Naive thymus-derived CD4-positive, alpha-beta T cell (primary cell): ENCODE measurements at regions of chr1 and their contacts with region 1.

Region 1: DNA sequence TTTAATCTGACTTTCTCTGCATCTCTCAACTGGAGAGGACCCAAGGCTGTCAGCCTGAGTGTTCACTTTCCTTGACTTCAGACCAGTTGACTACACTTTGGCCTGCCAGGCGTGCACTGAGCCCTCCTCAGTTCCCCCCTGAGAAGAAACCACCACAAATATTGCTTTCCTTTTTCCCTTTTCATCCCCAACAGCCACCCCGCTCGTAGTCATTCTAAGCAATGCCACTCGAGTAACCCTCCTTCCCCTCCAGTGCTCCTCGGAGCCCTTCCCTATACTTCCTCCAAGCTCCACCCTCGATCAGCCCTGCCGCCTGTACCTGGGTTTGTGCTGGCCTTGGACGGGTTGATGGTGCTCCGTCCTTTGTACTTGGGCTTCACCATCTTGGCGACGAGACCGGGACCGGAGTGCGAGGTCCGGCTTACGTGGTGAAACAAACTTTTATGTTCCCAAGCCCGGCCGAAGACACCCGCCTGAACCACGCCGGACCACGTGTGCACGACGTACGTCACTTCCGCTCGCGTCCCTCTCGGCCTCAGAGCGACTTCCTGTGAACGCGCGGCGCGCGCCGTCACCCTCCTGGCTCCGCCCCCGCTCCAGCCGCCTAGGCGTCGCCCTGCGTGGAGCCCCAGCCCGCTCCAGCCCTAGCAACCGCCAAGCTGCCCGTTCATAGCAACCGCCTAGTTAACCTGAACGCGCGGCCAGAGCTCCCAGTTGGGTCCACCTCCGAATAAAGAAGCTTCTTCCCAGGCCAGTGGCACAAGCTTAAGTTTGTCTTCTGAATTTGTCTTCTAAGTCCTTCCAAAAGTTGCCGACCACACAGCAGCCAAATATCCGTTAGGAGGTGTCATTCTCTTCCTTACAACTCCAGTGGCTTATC is at the start of gene GNL2:
- DNase-seq: peak; percentile 91 to 97 (median 95)
- ATAC-seq: peak; percentile 99
- H3K4me3 ChIP-seq: peak within 1 kb of the TSS; percentile 81
- H3K4me3 Mint-ChIP-seq: peak within 1 kb of the TSS; percentile 96 to 100 (median 99)
- H3K27ac ChIP-seq: peak within 1 kb of the TSS; percentile 86
- H3K27ac Mint-ChIP-seq: peak within 1 kb of the TSS; percentile 92 to 99 (median 98)
- H3K4me1 ChIP-seq: peaks cover 12 to 22% of the 10 kb centered on the region in 2 donors
- H3K4me1 Mint-ChIP-seq: peaks cover 17 to 43% (median 33%) of the 10 kb centered on the region in 7 donors
- H3K27me3 ChIP-seq: no peaks in the 10 kb centered on the region
- H3K27me3 Mint-ChIP-seq: peaks cover 0 to 12% (median 0%) of the 10 kb centered on the region in 5 donors
- total RNA-seq, gene GNL2: 33.3 to 60.9 (median 56.0) TPM

Region 2: GRCh38 chr1:37449936-37450335 is 145.7 kb before region 1 on chr1:
- CTCF ChIA-PET with region 1: no interaction called
- POLR2A ChIA-PET with region 1: no interaction called
- intact Hi-C with region 1: loop called in 1 of 2 experiments (anchors 2 kb)
- DNase-seq: peak in 6 of 9 donors; percentile 20 to 48 (median 39)
- ATAC-seq: peak; percentile 82
- H3K4me3 ChIP-seq: no peak overlapping the region
- H3K4me3 Mint-ChIP-seq: peak overlapping the region in 6 of 10 donors; percentile 29 to 65 (median 48)
- H3K27ac ChIP-seq: no peak overlapping the region
- H3K27ac Mint-ChIP-seq: peak overlapping the region in 7 of 9 donors; percentile 10 to 77 (median 38)
- H3K4me1 ChIP-seq: peaks cover 0 to 8% of the 10 kb centered on the region in 2 donors
- H3K4me1 Mint-ChIP-seq: peaks cover 5 to 17% (median 13%) of the 10 kb centered on the region in 7 donors
- H3K27me3 ChIP-seq: no peaks in the 10 kb centered on the region
- H3K27me3 Mint-ChIP-seq: peaks cover 0 to 15% (median 8%) of the 10 kb centered on the region in 5 donors

Region 3: GRCh38 chr1:37479255-37480124 is 116.2 kb before region 1 on chr1:
- CTCF ChIA-PET with region 1: no interaction called
- POLR2A ChIA-PET with region 1: interaction called, 8 read pairs
- intact Hi-C with region 1: loop called (anchors 1 to 5 kb)
- DNase-seq: peak in 8 of 9 donors; percentile 54 to 90 (median 63)
- ATAC-seq: peak; percentile 69
- H3K4me3 ChIP-seq: peak overlapping the region; percentile 87
- H3K4me3 Mint-ChIP-seq: peak overlapping the region; percentile 91 to 99 (median 96)
- H3K27ac ChIP-seq: peak overlapping the region; percentile 95
- H3K27ac Mint-ChIP-seq: peak overlapping the region; percentile 96 to 99 (median 98)
- H3K4me1 ChIP-seq: peaks cover 26% of the 10 kb centered on the region in 2 donors
- H3K4me1 Mint-ChIP-seq: peaks cover 21 to 50% (median 34%) of the 10 kb centered on the region in 7 donors
- H3K27me3 ChIP-seq: no peaks in the 10 kb centered on the region
- H3K27me3 Mint-ChIP-seq: no peaks in the 10 kb centered on the region

Region 4: GRCh38 chr1:37553927-37554808 is 41.5 kb before region 1 on chr1 and contains the start of gene SNIP1:
- CTCF ChIA-PET with region 1: no interaction called
- POLR2A ChIA-PET with region 1: interaction called, 4 read pairs
- intact Hi-C with region 1: loop called (anchors 1 kb)
- DNase-seq: peak; percentile 67 to 94 (median 92)
- ATAC-seq: peak; percentile 99
- H3K4me3 ChIP-seq: peak within 1 kb of the TSS; percentile 92
- H3K4me3 Mint-ChIP-seq: peak within 1 kb of the TSS; percentile 97 to 100 (median 99)
- H3K27ac ChIP-seq: peak within 1 kb of the TSS; percentile 94
- H3K27ac Mint-ChIP-seq: peak within 1 kb of the TSS; percentile 91 to 99 (median 98)
- H3K4me1 ChIP-seq: peaks cover 10 to 24% of the 10 kb centered on the region in 2 donors
- H3K4me1 Mint-ChIP-seq: peaks cover 23 to 51% (median 45%) of the 10 kb centered on the region in 7 donors
- H3K27me3 ChIP-seq: no peaks in the 10 kb centered on the region
- H3K27me3 Mint-ChIP-seq: peaks cover 0 to 6% (median 0%) of the 10 kb centered on the region in 5 donors
- total RNA-seq, gene SNIP1: 27.8 to 53.6 (median 36.7) TPM

Region 5: GRCh38 chr1:37807555-37808368 is 212.1 kb after region 1 on chr1 and contains the starts of genes C1orf122 and YRDC:
- CTCF ChIA-PET with region 1: no interaction called
- POLR2A ChIA-PET with region 1: interaction called, 5 read pairs
- intact Hi-C with region 1: loop called in 1 of 2 experiments (anchors 5 kb)
- DNase-seq: peak; percentile 82 to 94 (median 88)
- ATAC-seq: peak; percentile 94
- H3K4me3 ChIP-seq: peak within 1 kb of the TSS; percentile 89
- H3K4me3 Mint-ChIP-seq: peak within 1 kb of the TSS; percentile 85 to 99 (median 96)
- H3K27ac ChIP-seq: peak within 1 kb of the TSS; percentile 96
- H3K27ac Mint-ChIP-seq: peak within 1 kb of the TSS; percentile 89 to 98 (median 96)
- H3K4me1 ChIP-seq: peaks cover 15 to 20% of the 10 kb centered on the region in 2 donors
- H3K4me1 Mint-ChIP-seq: peaks cover 27 to 55% (median 34%) of the 10 kb centered on the region in 7 donors
- H3K27me3 ChIP-seq: no peaks in the 10 kb centered on the region
- H3K27me3 Mint-ChIP-seq: no peaks in the 10 kb centered on the region
- total RNA-seq, gene C1orf122: 11.4 to 20.6 (median 11.7) TPM
- total RNA-seq, gene YRDC: 13.1 to 30.6 (median 22.3) TPM

Region 6: DNA sequence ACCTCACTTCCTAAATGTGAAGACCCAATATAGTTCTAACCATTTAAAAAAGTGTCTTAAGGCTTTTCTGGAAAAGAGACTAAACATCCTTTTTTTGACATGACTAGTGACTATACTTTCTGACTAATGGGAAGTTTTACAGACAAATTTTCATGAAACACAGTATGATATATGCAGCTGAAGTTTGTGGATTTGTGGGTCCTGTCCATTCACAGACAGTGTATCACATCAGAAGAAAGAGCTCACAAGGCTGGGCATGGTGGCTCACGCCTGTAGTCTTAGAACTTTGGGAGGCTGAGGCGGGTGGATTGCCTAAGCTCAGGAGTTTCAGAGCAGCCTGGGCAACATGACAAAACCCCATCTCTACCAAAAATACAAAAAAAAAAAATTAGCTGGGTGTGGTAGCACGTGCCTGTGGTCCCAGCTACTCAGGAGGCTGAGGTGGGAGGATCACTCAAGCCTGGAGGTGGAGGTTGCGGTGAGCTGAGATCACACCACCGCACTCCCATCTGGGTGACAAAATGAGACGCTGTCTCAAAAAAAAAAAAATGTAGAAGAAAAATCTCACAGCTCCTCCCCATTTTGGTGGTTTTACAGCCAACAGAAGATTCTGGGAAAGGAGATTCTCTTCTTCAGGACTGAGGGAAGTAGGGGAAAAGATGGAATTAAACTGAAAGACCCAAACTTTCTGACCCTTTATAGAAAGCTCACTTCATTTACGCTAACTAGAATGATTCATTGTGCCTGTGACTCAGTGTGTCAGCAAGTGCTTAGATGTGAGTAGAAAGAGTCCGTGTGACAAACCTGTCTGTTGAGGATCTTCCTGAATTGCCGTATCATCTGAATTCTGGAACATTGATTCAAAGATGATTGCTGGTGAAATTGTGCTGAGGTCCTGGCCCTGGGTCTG is 227.5 kb after region 1 on chr1:
- CTCF ChIA-PET with region 1: no interaction called
- POLR2A ChIA-PET with region 1: no interaction called
- intact Hi-C with region 1: no loop called
- DNase-seq: no peak
- ATAC-seq: peak; percentile 44
- H3K4me3 ChIP-seq: no peak overlapping the region
- H3K4me3 Mint-ChIP-seq: no peak overlapping the region
- H3K27ac ChIP-seq: no peak overlapping the region
- H3K27ac Mint-ChIP-seq: peak overlapping the region in 1 of 9 donors; percentile 42
- H3K4me1 ChIP-seq: no peaks in the 10 kb centered on the region
- H3K4me1 Mint-ChIP-seq: peaks cover 0 to 11% (median 0%) of the 10 kb centered on the region in 7 donors
- H3K27me3 ChIP-seq: no peaks in the 10 kb centered on the region
- H3K27me3 Mint-ChIP-seq: no peaks in the 10 kb centered on the region